ENCODE measurements at regions of chr5 and their contacts with region 1.

Region 1: DNA sequence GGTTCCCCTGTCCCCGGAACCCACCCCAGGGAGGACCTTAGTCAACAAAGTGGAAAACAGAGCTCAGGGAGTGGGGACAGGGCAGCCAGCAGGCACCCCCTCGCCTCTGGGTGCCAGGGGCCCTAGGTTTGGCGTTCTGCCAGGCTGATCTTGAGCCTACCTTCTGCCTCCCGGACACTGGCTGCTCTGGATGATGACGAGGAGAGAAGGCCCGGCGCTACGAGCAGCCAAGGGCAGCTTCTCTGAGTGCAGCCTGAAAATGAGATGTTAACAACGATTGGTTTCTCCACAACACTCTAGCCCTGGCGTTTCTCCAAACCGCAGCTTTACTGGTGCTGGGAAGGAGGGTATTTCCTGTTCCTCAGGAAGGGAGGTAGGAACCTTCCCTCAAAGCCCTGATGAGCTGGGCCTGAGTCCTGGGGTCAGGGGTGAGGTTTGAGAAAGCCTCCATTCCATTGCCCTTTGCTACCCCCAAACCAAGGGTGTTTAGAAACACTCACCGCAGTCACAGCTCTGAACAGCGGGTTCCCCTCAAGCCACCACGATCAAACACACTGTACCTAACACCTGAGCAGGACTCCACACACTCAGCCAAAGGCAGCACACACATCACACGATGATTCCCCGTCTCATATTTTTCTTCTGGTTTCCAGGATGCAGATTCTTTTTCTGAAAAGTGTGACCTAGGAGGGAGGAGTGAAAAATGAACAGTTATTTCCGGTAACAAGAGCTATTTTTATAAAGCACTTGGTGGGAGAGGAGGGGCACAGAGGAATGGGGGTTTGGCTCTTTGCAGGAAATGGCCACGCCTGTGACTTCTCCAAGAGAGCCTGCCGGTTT is at the start of gene STING1:
- DNase-seq: peak; percentile 43 to 85 (median 78)
- H3K4me3 ChIP-seq: peak within 1 kb of the TSS; percentile 94
- H3K4me3 Mint-ChIP-seq: peak within 1 kb of the TSS; percentile 86 to 90 (median 88)
- H3K27ac ChIP-seq: peak within 1 kb of the TSS; percentile 82
- H3K27ac Mint-ChIP-seq: peak within 1 kb of the TSS; percentile 85 to 98 (median 90)
- H3K4me1 ChIP-seq: peaks cover 52% of the 10 kb centered on the region
- H3K4me1 Mint-ChIP-seq: peaks cover 28 to 51% (median 49%) of the 10 kb centered on the region in 3 donors
- H3K27me3 ChIP-seq: no peaks in the 10 kb centered on the region
- H3K27me3 Mint-ChIP-seq: no peaks in the 10 kb centered on the region
- total RNA-seq, gene STING1: 107 to 109 TPM

Region 2: DNA sequence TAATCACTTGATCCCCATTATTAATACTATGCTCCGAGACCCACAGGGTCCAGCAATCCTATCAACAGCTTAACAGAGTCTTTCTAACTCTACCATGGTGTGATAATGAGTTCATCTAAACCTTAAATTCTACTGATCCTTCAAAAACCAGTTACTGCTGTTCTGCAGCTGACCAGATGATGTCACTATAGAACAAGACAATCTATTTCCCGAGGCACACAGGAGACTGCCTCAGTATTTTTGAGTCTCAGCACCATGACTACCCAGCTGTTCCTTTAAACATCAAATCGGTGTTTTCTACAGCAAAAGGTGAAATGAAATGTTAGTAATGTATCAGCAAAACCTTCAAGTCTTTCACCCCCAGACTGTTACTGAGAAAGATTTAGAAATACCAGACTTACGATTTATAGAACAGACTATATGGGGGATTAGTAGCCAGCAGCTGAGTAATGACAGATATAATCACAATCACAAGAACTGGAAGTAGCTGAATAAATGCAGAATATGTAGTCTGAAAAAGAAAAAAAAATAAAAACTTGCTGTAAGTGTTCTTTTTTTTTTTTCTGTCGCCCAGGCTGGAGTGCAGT is 59.9 kb before region 1 on chr5:
- CTCF ChIA-PET with region 1: interaction called, 26 read pairs
- POLR2A ChIA-PET with region 1: no interaction called
- DNase-seq: peak; percentile 6 to 73 (median 66)
- H3K4me3 ChIP-seq: no peak overlapping the region
- H3K4me3 Mint-ChIP-seq: no peak overlapping the region
- H3K27ac ChIP-seq: no peak overlapping the region
- H3K27ac Mint-ChIP-seq: peak overlapping the region in 5 of 8 donors; percentile 44 to 82 (median 56)
- H3K4me1 ChIP-seq: no peaks in the 10 kb centered on the region
- H3K4me1 Mint-ChIP-seq: peaks cover 3 to 6% (median 4%) of the 10 kb centered on the region in 3 donors
- H3K27me3 ChIP-seq: no peaks in the 10 kb centered on the region
- H3K27me3 Mint-ChIP-seq: peaks cover 0 to 2% of the 10 kb centered on the region in 2 donors

Region 3: GRCh38 chr5:139439013-139439903 is 43.0 kb before region 1 on chr5 and contains the start of gene DNAJC18:
- CTCF ChIA-PET with region 1: interaction called, 6 read pairs
- POLR2A ChIA-PET with region 1: interaction called, 18 read pairs
- DNase-seq: peak; percentile 81 to 91 (median 84)
- H3K4me3 ChIP-seq: peak within 1 kb of the TSS; percentile 98
- H3K4me3 Mint-ChIP-seq: peak within 1 kb of the TSS; percentile 95 to 99 (median 98)
- H3K27ac ChIP-seq: peak within 1 kb of the TSS; percentile 95
- H3K27ac Mint-ChIP-seq: peak within 1 kb of the TSS; percentile 94 to 100 (median 99)
- H3K4me1 ChIP-seq: peaks cover 29% of the 10 kb centered on the region
- H3K4me1 Mint-ChIP-seq: peaks cover 31 to 47% (median 45%) of the 10 kb centered on the region in 3 donors
- H3K27me3 ChIP-seq: no peaks in the 10 kb centered on the region
- H3K27me3 Mint-ChIP-seq: no peaks in the 10 kb centered on the region
- total RNA-seq, gene DNAJC18: 25.3 to 25.7 TPM

Region 4: DNA sequence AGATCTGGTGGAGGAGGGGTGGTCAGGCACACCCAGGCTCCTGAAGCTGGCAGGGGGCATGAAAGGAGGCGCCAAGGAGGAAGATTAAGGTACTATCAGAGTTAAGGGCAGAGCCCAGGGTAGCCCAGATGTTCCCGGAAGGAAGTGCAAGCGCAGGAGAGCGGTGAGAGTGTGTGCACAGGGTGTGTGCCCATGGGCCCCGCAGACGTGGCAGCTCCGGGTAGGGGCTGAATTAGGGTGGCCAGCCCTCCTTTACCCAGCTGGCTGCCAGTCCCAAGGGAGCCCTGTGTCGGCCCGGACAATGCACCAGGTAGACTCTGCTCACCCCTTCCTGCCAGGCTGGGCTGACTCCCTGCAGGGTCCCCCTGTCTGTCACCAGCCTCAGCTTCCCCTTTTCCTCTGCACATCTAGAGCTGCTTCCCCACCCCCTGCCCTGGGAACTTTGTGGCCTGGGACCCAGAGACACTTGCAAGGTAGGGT is 11.4 kb before region 1 on chr5 and contains the start of gene SMIM33:
- CTCF ChIA-PET with region 1: interaction called, 7 read pairs
- POLR2A ChIA-PET with region 1: interaction called, 13 read pairs
- DNase-seq: peak in 4 of 5 donors; percentile 25 to 57 (median 38)
- H3K4me3 ChIP-seq: peak within 1 kb of the TSS; percentile 36
- H3K4me3 Mint-ChIP-seq: peak within 1 kb of the TSS; percentile 81 to 97 (median 91)
- H3K27ac ChIP-seq: no peak within 1 kb of the TSS
- H3K27ac Mint-ChIP-seq: peak within 1 kb of the TSS; percentile 83 to 98 (median 94)
- H3K4me1 ChIP-seq: peaks cover 73% of the 10 kb centered on the region
- H3K4me1 Mint-ChIP-seq: peaks cover 64 to 76% (median 75%) of the 10 kb centered on the region in 3 donors
- H3K27me3 ChIP-seq: no peaks in the 10 kb centered on the region
- H3K27me3 Mint-ChIP-seq: no peaks in the 10 kb centered on the region
- total RNA-seq, gene SMIM33: 0.11 to 0.28 TPM

Region 5: DNA sequence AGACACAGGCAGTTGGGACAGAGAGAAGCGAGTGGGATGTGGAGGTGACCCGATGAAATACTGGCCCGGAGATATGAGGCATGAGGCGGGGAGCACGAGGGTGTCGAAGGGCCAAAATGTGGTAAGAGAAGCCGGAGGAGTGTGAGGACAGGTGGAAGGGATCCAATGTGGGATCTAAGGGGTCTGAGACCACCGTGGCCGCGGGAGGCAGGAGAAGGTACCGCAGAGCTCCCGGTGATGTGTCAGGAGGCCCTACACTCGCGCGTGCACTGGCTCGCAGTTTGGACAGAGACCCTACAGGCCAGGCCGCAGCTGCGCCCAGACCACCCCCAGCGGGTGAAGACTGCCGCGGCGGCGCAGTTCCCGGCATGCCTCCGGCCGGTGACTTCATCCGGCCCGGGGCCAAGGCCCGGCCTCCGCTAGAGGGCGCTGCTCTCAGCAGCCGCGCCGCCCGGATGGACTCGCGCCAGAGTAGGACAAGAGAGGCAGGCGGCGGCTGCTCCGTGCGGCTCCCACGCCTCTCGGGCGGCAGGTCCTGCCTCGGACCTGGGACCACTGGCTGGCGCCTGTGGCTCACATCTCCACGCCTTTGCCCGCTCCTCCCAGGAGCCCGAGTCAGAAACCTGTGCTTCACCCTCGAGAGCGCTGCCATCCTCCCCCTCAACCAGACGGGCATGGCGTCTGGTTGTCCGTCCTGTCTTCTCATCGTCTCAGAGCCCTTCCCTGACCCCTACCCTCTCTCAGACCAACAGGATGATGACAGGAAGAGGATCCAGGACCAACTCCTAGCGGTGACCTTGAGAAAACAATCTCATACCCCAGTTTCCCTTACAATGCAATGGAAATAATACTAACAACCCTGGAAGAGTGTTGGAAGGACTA is 35.7 kb after region 1 on chr5:
- CTCF ChIA-PET with region 1: interaction called, 21 read pairs
- POLR2A ChIA-PET with region 1: interaction called, 4 read pairs
- DNase-seq: peak; percentile 82 to 92 (median 87)
- H3K4me3 ChIP-seq: peak overlapping the region; percentile 96
- H3K4me3 Mint-ChIP-seq: peak overlapping the region; percentile 80 to 98 (median 88)
- H3K27ac ChIP-seq: peak overlapping the region; percentile 86
- H3K27ac Mint-ChIP-seq: peak overlapping the region; percentile 89 to 98 (median 94)
- H3K4me1 ChIP-seq: peaks cover 9% of the 10 kb centered on the region
- H3K4me1 Mint-ChIP-seq: peaks cover 20 to 23% (median 22%) of the 10 kb centered on the region in 3 donors
- H3K27me3 ChIP-seq: no peaks in the 10 kb centered on the region
- H3K27me3 Mint-ChIP-seq: peaks cover 4 to 6% of the 10 kb centered on the region in 2 donors

Region 6: DNA sequence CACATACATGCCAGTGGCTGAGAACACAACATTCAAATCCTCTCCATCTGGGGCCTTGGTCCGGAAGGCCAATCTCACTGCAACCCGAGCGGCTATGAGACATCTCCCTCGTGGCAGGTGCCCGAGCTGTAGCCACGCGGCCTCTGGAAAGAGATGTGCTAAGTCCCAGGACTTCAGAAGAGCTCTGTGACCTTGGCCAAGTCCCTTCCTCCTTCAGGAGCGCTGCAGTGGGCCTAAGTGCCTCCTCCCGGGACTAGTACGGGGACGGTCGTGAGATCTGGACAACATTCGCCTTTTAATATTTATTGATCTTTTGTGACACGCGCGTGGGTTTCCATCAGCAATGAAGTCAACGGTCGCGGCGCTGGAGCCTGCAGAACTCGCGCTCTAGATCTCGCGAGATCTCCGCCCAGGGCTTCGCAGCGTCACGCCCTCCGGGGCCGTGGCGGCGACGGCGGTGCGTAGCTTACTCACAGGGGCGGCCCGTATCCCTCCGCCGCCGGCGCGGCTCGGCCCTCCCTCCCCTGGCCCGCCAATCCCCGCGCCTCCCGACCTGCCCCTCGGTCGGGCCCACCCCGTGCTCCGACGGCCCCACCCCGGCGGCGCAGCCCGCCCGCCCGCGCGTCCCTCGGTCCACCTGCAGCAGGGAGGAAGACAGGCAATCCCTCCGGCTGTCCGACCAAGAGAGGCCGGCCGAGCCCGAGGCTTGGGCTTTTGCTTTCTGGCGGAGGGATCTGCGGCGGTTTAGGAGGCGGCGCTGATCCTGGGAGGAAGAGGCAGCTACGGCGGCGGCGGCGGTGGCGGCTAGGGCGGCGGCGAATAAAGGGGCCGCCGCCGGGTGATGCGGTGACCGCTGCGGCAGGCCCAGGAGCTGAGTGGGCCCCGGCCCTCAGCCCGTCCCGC is 78.7 kb after region 1 on chr5 and contains the start of gene UBE2D2:
- CTCF ChIA-PET with region 1: no interaction called
- POLR2A ChIA-PET with region 1: interaction called, 13 read pairs
- DNase-seq: peak; percentile 97 to 98 (median 97)
- H3K4me3 ChIP-seq: peak within 1 kb of the TSS; percentile 64
- H3K4me3 Mint-ChIP-seq: peak within 1 kb of the TSS; percentile 90 to 97 (median 95)
- H3K27ac ChIP-seq: peak within 1 kb of the TSS; percentile 77
- H3K27ac Mint-ChIP-seq: peak within 1 kb of the TSS; percentile 89 to 99 (median 97)
- H3K4me1 ChIP-seq: peaks cover 40% of the 10 kb centered on the region
- H3K4me1 Mint-ChIP-seq: peaks cover 36 to 46% (median 40%) of the 10 kb centered on the region in 3 donors
- H3K27me3 ChIP-seq: no peaks in the 10 kb centered on the region
- H3K27me3 Mint-ChIP-seq: peaks cover 0 to 3% of the 10 kb centered on the region in 2 donors
- total RNA-seq, gene UBE2D2: 253 to 274 TPM

Region 7: DNA sequence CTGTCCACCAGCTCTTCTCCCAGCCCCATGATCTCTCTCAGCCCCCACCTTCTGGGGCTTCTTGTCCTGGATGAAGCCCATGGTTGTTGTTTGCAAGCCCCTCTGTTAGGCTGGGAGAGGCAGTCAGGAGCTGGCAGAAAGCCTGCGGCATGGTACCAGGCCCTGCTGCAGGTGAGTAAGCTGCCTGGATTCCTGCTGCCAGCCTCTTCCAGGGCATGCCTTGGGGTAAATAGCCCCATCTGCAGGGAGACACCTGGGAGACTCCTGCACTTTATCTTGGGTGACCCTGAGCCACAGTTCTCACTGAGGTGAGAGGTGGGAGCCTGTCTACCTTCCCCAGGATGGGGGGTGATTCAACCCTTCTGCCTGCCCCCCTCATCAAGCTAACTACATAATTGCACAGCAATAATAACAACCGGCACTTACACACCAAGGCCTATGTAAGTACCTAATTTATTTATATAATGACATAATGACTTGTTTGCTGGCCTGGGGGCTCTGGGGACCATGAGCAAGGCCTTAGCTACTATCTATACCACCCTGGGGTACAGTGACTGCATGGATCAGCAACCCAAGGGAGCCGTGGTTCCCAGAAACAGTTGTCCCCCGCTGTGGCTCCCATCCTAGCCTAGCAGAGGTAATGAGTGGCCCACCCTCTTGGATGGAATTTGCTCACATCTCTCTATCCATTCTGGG is 429.3 kb after region 1 on chr5:
- CTCF ChIA-PET with region 1: no interaction called
- POLR2A ChIA-PET with region 1: no interaction called
- DNase-seq: no peak
- H3K4me3 ChIP-seq: no peak overlapping the region
- H3K4me3 Mint-ChIP-seq: no peak overlapping the region
- H3K27ac ChIP-seq: no peak overlapping the region
- H3K27ac Mint-ChIP-seq: no peak overlapping the region
- H3K4me1 ChIP-seq: no peaks in the 10 kb centered on the region
- H3K4me1 Mint-ChIP-seq: no peaks in the 10 kb centered on the region
- H3K27me3 ChIP-seq: peaks cover 5% of the 10 kb centered on the region
- H3K27me3 Mint-ChIP-seq: peaks cover 21 to 29% of the 10 kb centered on the region in 2 donors